ENCODE measurements at regions of chr16 and their contacts with region 1.

Region 1: GRCh38 chr16:74813109-74813641 is 38.6 kb upstream of the FA2H start:
- DNase-seq: peak; percentile 86 to 97
- H3K4me3 ChIP-seq: no peak overlapping the region
- H3K27ac ChIP-seq: no peak overlapping the region
- H3K4me1 ChIP-seq: peaks cover 0 to 11% (median 2%) of the 10 kb centered on the region in 4 experiments; a peak in 5 of 7 replicates
- H3K27me3 ChIP-seq: peaks cover 5 to 19% (median 14%) of the 10 kb centered on the region in 4 experiments; a peak in 6 of 7 replicates
- CTCF ChIP-seq: peak; percentile 90 to 100 (median 99)
- EP300 ChIP-seq: no peak
- POLR2A ChIP-seq: no peak
- RAD21 ChIP-seq: peak; percentile 94 to 95

Region 2: DNA sequence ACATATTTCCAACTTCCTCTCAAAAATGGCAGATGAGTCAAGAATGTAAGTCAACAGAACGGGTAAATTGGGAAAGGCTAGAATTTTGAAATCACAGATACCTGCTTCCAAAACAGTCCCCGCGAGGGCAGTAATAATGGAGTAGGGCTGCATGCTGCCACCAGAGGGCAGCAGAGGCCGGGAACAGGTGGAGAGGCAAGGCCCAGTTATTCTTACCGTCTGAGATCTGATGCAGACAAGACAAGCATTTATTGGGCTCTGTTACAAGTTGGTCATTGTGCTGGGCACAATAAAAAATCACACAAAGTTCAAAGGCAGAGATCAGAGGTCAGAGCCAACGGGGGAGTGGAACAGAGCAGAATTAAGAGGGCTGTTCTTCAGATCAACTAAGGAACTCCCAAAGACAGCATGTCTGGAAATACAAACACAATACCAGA is 103.7 kb before region 1 on chr16:
- CTCF ChIA-PET with region 1: interaction called, 15 read pairs
- POLR2A ChIA-PET with region 1: no interaction called
- DNase-seq: peak; percentile 63 to 91
- H3K4me3 ChIP-seq: no peak overlapping the region
- H3K27ac ChIP-seq: no peak overlapping the region
- H3K4me1 ChIP-seq: no peaks in the 10 kb centered on the region
- H3K27me3 ChIP-seq: peaks cover 0 to 2% (median 0%) of the 10 kb centered on the region in 4 experiments; a peak in 2 of 7 replicates
- CTCF ChIP-seq: peak; percentile 92 to 98 (median 95)
- EP300 ChIP-seq: no peak
- POLR2A ChIP-seq: no peak
- RAD21 ChIP-seq: peak; percentile 96

Region 3: GRCh38 chr16:74726716-74727115 is 86.5 kb before region 1 on chr16:
- CTCF ChIA-PET with region 1: interaction called, 35 read pairs
- POLR2A ChIA-PET with region 1: no interaction called
- DNase-seq: peak; percentile 58 to 86
- H3K4me3 ChIP-seq: no peak overlapping the region
- H3K27ac ChIP-seq: no peak overlapping the region
- H3K4me1 ChIP-seq: peaks cover 2 to 10% (median 5%) of the 10 kb centered on the region in 4 experiments; a peak in 5 of 7 replicates
- H3K27me3 ChIP-seq: 0 out of 7 replicates have a peak, but pooled peaks cover 0 to 2% (median 0%) of the 10 kb centered on the region in 4 experiments
- CTCF ChIP-seq: peak; percentile 59 to 91 (median 83)
- EP300 ChIP-seq: no peak
- POLR2A ChIP-seq: no peak
- RAD21 ChIP-seq: peak; percentile 77 to 82

Region 4: GRCh38 chr16:74774203-74775116 is 38.7 kb before region 1 on chr16 and contains the start of gene FA2H:
- CTCF ChIA-PET with region 1: interaction called, 37 read pairs
- POLR2A ChIA-PET with region 1: interaction called, 6 read pairs
- DNase-seq: peak; percentile 58 to 90
- H3K4me3 ChIP-seq: peak within 1 kb of the TSS; percentile 47 to 64 (median 54)
- H3K27ac ChIP-seq: no peak within 1 kb of the TSS
- H3K4me1 ChIP-seq: peaks cover 0 to 6% (median 2%) of the 10 kb centered on the region in 4 experiments; a peak in 1 of 7 replicates
- H3K27me3 ChIP-seq: peaks cover 0 to 21% (median 16%) of the 10 kb centered on the region in 4 experiments; a peak in 6 of 7 replicates
- CTCF ChIP-seq: peak; percentile 22 to 48 (median 40)
- EP300 ChIP-seq: 0 out of 3 replicates have a peak, but pooled peaks of 1 of the 2 experiments have one; percentile 37
- POLR2A ChIP-seq: no peak
- RAD21 ChIP-seq: peak in 1 of 2 experiments; percentile 30; a peak in 1 of 4 replicates
- total RNA-seq, gene FA2H: 1.6 and 2.1 TPM in 2 replicates

Region 5: GRCh38 chr16:74825941-74826542 is 12.9 kb after region 1 on chr16:
- CTCF ChIA-PET with region 1: interaction called, 28 read pairs
- POLR2A ChIA-PET with region 1: no interaction called
- DNase-seq: no peak
- H3K4me3 ChIP-seq: no peak overlapping the region
- H3K27ac ChIP-seq: no peak overlapping the region
- H3K4me1 ChIP-seq: peaks cover 0 to 2% (median 0%) of the 10 kb centered on the region in 4 experiments; a peak in 2 of 7 replicates
- H3K27me3 ChIP-seq: no peaks in the 10 kb centered on the region
- CTCF ChIP-seq: no peak
- EP300 ChIP-seq: no peak
- POLR2A ChIP-seq: no peak
- RAD21 ChIP-seq: no peak

Measured in H1 (cell line).